Posterior cingulate gyrus (tissue), 11 donors: ENCODE measurements at regions of chr1 and their contacts with region 1.

Region 1: GRCh38 chr1:88800382-88801051 is 90.8 kb downstream of the GTF2B start:
- DNase-seq: no peak

Region 2: DNA sequence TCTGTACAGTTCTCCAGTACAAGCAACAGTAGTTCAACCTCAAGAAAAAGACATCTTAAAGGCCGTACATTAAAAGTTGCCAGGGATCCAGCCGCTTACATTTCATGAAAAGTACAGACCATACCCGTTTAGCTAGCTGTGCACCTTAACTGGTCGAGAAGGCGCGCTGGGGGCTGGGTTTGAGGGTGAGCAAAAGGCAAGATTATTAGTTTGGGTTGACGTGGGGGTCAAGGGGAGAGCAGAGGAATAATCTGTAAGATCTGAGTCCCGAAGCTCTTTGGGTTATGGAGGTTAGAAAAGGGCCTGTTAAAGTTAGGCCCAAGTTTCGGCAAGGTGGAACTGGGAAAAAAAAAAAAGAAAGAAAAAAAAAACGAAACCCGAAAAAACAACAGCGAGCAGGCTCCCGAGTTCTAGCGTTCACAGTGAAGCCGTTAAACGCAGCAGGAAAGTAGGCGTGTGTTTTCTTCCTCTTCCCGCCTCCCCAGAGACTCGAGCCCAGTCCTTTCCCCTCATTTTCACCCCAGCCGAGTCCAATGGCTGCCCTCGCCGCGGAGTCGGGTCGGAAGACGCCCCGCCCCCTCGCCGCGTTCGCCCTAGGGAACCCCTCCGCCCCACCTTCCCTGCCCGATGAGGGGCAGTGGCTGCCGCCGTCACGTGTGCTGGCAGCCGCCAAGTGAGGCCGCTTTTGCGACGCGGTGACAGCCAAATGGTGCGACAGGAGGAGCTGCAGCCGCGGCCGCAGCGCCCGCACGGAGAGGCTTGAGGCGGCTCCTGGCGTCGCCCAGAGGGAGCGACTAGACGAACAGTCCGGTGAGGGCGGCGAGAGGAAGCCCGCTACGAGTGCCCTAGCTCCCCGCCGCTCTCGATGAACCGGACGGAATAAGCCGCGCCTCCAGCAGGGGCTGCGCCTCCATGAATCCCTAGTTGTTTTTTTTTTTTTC is 116.7 kb before region 1 on chr1 and contains the start of gene PKN2:
- intact Hi-C with region 1: loop called (anchors 10 kb)
- DNase-seq: peak; percentile 90 to 99 (median 92)

Region 3: GRCh38 chr1:89085781-89086180 is 285.3 kb after region 1 on chr1:
- intact Hi-C with region 1: no loop called
- DNase-seq: peak in 1 of 10 donors; percentile 25